Caco-2 (cell line): ENCODE measurements at regions of chr11 and their contacts with region 1.

Region 1: GRCh38 chr11:86999859-87000753 is 37.6 kb upstream of the TMEM135 start:
- DNase-seq: peak; percentile 98
- H3K4me3 ChIP-seq: no peak overlapping the region
- H3K4me3 Mint-ChIP-seq: peak overlapping the region; percentile 58
- H3K27ac Mint-ChIP-seq: peak overlapping the region; percentile 94
- H3K4me1 ChIP-seq: peaks cover 59% of the 10 kb centered on the region
- H3K4me1 Mint-ChIP-seq: peaks cover 72% of the 10 kb centered on the region
- H3K27me3 ChIP-seq: no peaks in the 10 kb centered on the region
- H3K27me3 Mint-ChIP-seq: no peaks in the 10 kb centered on the region
- CTCF ChIP-seq: no peak

Region 2: DNA sequence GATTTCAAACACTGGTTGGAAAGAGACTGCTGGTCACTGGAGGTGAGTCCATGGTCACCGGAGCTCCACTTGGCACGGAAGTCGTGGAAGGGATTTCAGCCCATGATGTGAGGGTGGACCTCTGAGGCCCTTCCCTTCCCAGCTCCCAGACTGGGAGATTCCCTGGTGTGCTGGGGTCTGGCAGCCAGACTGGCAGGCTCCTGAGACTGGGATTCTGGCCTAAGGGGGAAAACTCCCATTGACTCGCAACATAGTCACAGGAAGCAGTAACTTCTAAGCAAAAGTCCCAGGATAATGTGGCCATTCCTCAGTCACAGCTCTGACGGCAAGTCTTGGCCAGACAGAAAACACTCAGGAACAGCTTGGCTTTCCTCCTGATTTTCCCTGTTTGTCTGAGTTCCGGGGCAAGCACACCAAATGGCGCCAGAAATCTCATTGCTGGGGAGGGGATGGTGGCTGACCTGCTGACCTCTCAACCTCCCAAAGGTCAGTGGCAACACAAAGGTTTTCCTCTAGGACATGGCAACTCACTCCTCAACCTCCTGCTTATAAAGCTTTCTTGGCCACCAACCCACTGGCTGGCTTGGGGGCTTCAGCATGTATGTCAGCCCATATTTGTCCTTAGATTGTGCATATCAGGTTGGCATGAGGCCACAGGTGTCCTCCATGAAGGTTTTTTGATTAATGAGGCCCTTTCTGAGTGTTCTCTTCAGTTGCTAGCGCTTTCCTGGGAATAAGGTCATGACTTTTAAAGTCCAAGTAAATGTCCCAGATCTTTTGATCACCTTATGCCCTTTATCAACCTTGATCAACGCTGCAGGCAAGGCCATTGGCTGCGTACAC is 525.9 kb before region 1 on chr11:
- CTCF ChIA-PET with region 1: no interaction called
- POLR2A ChIA-PET with region 1: no interaction called
- intact Hi-C with region 1: no loop called
- DNase-seq: peak in 1 of 2 experiments; percentile 28
- H3K4me3 ChIP-seq: no peak overlapping the region
- H3K4me3 Mint-ChIP-seq: no peak overlapping the region
- H3K27ac Mint-ChIP-seq: no peak overlapping the region
- H3K4me1 ChIP-seq: peaks cover 64% of the 10 kb centered on the region
- H3K4me1 Mint-ChIP-seq: peaks cover 64% of the 10 kb centered on the region
- H3K27me3 ChIP-seq: no peaks in the 10 kb centered on the region
- H3K27me3 Mint-ChIP-seq: no peaks in the 10 kb centered on the region
- CTCF ChIP-seq: no peak

Region 3: GRCh38 chr11:86511086-86511551 is 489.0 kb before region 1 on chr11:
- CTCF ChIA-PET with region 1: no interaction called
- POLR2A ChIA-PET with region 1: no interaction called
- intact Hi-C with region 1: loop called (anchors 10 kb)
- DNase-seq: no peak
- H3K4me3 ChIP-seq: no peak overlapping the region
- H3K4me3 Mint-ChIP-seq: no peak overlapping the region
- H3K27ac Mint-ChIP-seq: no peak overlapping the region
- H3K4me1 ChIP-seq: peaks cover 91% of the 10 kb centered on the region
- H3K4me1 Mint-ChIP-seq: peaks cover 3% of the 10 kb centered on the region
- H3K27me3 ChIP-seq: no peaks in the 10 kb centered on the region
- H3K27me3 Mint-ChIP-seq: no peaks in the 10 kb centered on the region
- CTCF ChIP-seq: no peak

Region 4: GRCh38 chr11:86938900-86939880 is 60.9 kb before region 1 on chr11:
- CTCF ChIA-PET with region 1: interaction called, 5 read pairs
- POLR2A ChIA-PET with region 1: interaction called, 5 read pairs
- intact Hi-C with region 1: loop called (anchors 1 kb)
- DNase-seq: peak in 1 of 2 experiments; percentile 75
- H3K4me3 ChIP-seq: no peak overlapping the region
- H3K4me3 Mint-ChIP-seq: peak overlapping the region; percentile 60
- H3K27ac Mint-ChIP-seq: peak overlapping the region; percentile 84
- H3K4me1 ChIP-seq: peaks cover 51% of the 10 kb centered on the region
- H3K4me1 Mint-ChIP-seq: peaks cover 52% of the 10 kb centered on the region
- H3K27me3 ChIP-seq: no peaks in the 10 kb centered on the region
- H3K27me3 Mint-ChIP-seq: no peaks in the 10 kb centered on the region
- CTCF ChIP-seq: peak; percentile 79 to 83

Region 5: GRCh38 chr11:86978756-86979608 is 21.1 kb before region 1 on chr11:
- CTCF ChIA-PET with region 1: interaction called, 4 read pairs
- POLR2A ChIA-PET with region 1: no interaction called
- intact Hi-C with region 1: loop called (anchors 1 kb)
- DNase-seq: peak in 1 of 2 experiments; percentile 61
- H3K4me3 ChIP-seq: no peak overlapping the region
- H3K4me3 Mint-ChIP-seq: no peak overlapping the region
- H3K27ac Mint-ChIP-seq: no peak overlapping the region
- H3K4me1 ChIP-seq: peaks cover 10% of the 10 kb centered on the region
- H3K4me1 Mint-ChIP-seq: peaks cover 31% of the 10 kb centered on the region
- H3K27me3 ChIP-seq: no peaks in the 10 kb centered on the region
- H3K27me3 Mint-ChIP-seq: no peaks in the 10 kb centered on the region
- CTCF ChIP-seq: peak; percentile 84 to 87

Region 6: DNA sequence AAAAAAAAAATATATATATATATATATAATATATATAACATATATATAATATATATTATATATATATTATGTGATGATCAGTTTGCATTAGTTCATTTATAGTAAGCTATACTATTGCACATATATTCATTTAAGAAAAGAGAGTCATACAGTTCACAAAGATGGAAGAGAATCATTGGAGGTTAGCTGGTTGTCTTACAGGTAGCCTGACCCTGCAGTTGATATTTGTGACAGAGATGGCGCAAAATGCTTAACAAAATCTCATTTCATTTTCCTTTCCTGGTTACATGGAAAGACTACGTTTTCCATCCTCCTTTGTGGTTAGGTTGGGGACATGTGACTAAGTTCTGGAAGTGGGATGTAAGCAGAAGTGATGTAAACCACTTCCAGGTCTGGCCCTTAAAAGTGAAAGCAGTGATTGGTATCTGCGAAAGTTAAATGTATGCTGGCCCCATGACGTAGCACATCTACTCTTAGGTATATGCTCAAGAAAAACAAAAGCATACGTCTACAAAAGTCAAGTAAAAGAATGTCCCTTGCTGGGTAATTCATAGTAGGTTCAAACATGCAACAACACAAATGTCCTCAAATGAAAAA is 30.4 kb after region 1 on chr11:
- CTCF ChIA-PET with region 1: interaction called, 10 read pairs
- POLR2A ChIA-PET with region 1: interaction called, 4 read pairs
- intact Hi-C with region 1: loop called (anchors 1 kb)
- DNase-seq: peak in 1 of 2 experiments; percentile 47
- H3K4me3 ChIP-seq: no peak overlapping the region
- H3K4me3 Mint-ChIP-seq: no peak overlapping the region
- H3K27ac Mint-ChIP-seq: no peak overlapping the region
- H3K4me1 ChIP-seq: peaks cover 25% of the 10 kb centered on the region
- H3K4me1 Mint-ChIP-seq: peaks cover 34% of the 10 kb centered on the region
- H3K27me3 ChIP-seq: no peaks in the 10 kb centered on the region
- H3K27me3 Mint-ChIP-seq: no peaks in the 10 kb centered on the region
- CTCF ChIP-seq: no peak

Region 7: GRCh38 chr11:87097582-87097981 is 97.5 kb after region 1 on chr11:
- CTCF ChIA-PET with region 1: interaction called, 17 read pairs
- POLR2A ChIA-PET with region 1: no interaction called
- intact Hi-C with region 1: loop called (anchors 1 kb)
- DNase-seq: peak; percentile 87
- H3K4me3 ChIP-seq: no peak overlapping the region
- H3K4me3 Mint-ChIP-seq: no peak overlapping the region
- H3K27ac Mint-ChIP-seq: peak overlapping the region; percentile 26
- H3K4me1 ChIP-seq: peaks cover 12% of the 10 kb centered on the region
- H3K4me1 Mint-ChIP-seq: peaks cover 10% of the 10 kb centered on the region
- H3K27me3 ChIP-seq: no peaks in the 10 kb centered on the region
- H3K27me3 Mint-ChIP-seq: no peaks in the 10 kb centered on the region
- CTCF ChIP-seq: peak; percentile 96 to 98

Region 8: GRCh38 chr11:87290304-87290922 is 290.3 kb after region 1 on chr11:
- CTCF ChIA-PET with region 1: no interaction called
- POLR2A ChIA-PET with region 1: no interaction called
- intact Hi-C with region 1: loop called (anchors 1 kb)
- DNase-seq: peak in 1 of 2 experiments; percentile 76
- H3K4me3 ChIP-seq: no peak overlapping the region
- H3K4me3 Mint-ChIP-seq: no peak overlapping the region
- H3K27ac Mint-ChIP-seq: no peak overlapping the region
- H3K4me1 ChIP-seq: no peaks in the 10 kb centered on the region
- H3K4me1 Mint-ChIP-seq: peaks cover 5% of the 10 kb centered on the region
- H3K27me3 ChIP-seq: no peaks in the 10 kb centered on the region
- H3K27me3 Mint-ChIP-seq: no peaks in the 10 kb centered on the region
- CTCF ChIP-seq: peak; percentile 78 to 84